ENCODE measurements at regions of chr6 and their contacts with region 1.

Region 1: DNA sequence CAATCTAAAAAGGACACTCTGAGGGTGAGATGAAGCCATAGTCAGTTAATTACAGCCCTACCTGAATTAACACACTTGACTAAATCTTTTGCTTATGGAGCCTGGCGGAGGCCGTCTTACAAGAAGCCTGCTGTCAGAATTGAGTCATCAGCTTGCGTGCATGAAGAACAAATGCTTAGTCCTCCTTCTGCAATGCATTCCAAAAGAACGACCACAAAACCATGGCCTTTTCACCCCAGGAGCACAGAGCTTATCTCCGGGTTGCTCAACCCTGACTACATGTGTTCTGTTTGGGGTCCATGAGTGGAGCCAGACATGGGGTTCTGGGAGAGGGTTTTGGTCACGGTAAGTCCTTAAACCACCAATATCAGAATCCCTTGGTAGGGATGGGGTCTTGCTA is 318.1 kb downstream of the CLIC5 start:
- DNase-seq: peak; percentile 99
- ATAC-seq: peak; percentile 94
- H3K4me3 ChIP-seq: no peak overlapping the region
- H3K27ac ChIP-seq: peak overlapping the region; percentile 35
- H3K4me1 ChIP-seq: peaks cover 13% of the 10 kb centered on the region
- H3K27me3 ChIP-seq: no peaks in the 10 kb centered on the region
- CTCF ChIP-seq: no peak
- POLR2A ChIP-seq: no peak
- RAD21 ChIP-seq: no peak; the same call in 1 of the 2 replicates

Region 2: GRCh38 chr6:45577836-45578504 is 119.6 kb before region 1 on chr6:
- CTCF ChIA-PET with region 1: no interaction called
- POLR2A ChIA-PET with region 1: no interaction called
- dilution Hi-C with region 1: no loop called
- in situ Hi-C with region 1: no loop called
- intact Hi-C with region 1: no loop called
- DNase-seq: peak; percentile 43
- ATAC-seq: peak; percentile 65
- H3K4me3 ChIP-seq: no peak overlapping the region
- H3K27ac ChIP-seq: peak overlapping the region; percentile 7; the same call in 1 of the 2 replicates
- H3K4me1 ChIP-seq: peaks cover 5% of the 10 kb centered on the region
- H3K27me3 ChIP-seq: no peaks in the 10 kb centered on the region
- CTCF ChIP-seq: no peak
- POLR2A ChIP-seq: no peak
- RAD21 ChIP-seq: no peak

Region 3: GRCh38 chr6:45640081-45640491 is 57.5 kb before region 1 on chr6:
- CTCF ChIA-PET with region 1: no interaction called
- POLR2A ChIA-PET with region 1: no interaction called
- dilution Hi-C with region 1: no loop called
- in situ Hi-C with region 1: no loop called
- intact Hi-C with region 1: no loop called
- DNase-seq: peak; percentile 78
- ATAC-seq: peak; percentile 90
- H3K4me3 ChIP-seq: no peak overlapping the region
- H3K27ac ChIP-seq: no peak overlapping the region
- H3K4me1 ChIP-seq: peaks cover 3% of the 10 kb centered on the region
- H3K27me3 ChIP-seq: no peaks in the 10 kb centered on the region; the same call in 1 of the 2 replicates
- CTCF ChIP-seq: no peak
- POLR2A ChIP-seq: no peak
- RAD21 ChIP-seq: no peak

Region 4: DNA sequence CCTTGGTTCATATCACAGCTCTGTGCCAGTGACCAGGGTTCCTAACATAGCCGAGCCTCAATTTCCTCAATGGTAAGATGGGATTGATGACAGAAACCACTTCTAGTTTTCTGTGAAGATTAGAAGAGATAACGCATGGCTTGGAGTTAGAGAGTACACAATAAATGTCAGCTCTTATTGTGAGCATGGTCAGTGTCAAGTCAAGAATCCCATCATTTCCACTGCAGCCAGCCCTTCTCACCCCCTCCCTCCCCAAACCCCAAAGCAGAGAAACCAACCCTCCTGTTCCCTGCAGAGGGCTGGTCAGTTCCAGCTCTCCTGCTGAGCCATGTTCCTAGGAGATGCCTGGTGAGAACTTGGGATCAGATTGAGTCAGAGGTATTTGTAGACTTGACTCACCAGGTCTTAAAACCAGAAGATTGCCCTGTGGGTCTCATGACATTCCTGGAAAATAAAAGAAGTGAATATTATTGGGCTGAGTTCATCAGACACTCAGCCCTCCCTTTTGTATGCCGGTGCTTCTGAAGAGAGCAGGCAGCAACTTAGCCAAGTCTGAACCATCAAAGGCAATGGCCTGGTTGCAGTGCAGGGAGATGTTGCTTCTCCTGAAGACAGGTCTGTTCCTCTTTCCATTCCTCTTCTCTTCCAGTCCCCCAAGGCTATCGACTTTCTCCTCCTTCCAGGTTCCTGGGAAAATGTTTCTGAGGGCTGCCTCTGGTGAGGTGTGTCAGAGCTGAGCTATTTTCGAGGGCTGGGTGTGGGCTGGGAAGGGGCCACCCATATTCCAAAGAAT is 41.8 kb before region 1 on chr6:
- CTCF ChIA-PET with region 1: no interaction called
- POLR2A ChIA-PET with region 1: no interaction called
- dilution Hi-C with region 1: no loop called
- in situ Hi-C with region 1: no loop called
- intact Hi-C with region 1: loop called (anchors 5 kb)
- DNase-seq: peak; percentile 99
- ATAC-seq: peak; percentile 92
- H3K4me3 ChIP-seq: no peak overlapping the region
- H3K27ac ChIP-seq: peak overlapping the region; percentile 78
- H3K4me1 ChIP-seq: peaks cover 29% of the 10 kb centered on the region
- H3K27me3 ChIP-seq: no peaks in the 10 kb centered on the region
- CTCF ChIP-seq: no peak
- POLR2A ChIP-seq: peak; percentile 19; the same call in 1 of the 2 replicates
- RAD21 ChIP-seq: peak; percentile 31; the same call in 1 of the 2 replicates

Measured in IMR-90 (cell line).